ENCODE measurements at regions of chr10 and their contacts with region 1.

Region 1: DNA sequence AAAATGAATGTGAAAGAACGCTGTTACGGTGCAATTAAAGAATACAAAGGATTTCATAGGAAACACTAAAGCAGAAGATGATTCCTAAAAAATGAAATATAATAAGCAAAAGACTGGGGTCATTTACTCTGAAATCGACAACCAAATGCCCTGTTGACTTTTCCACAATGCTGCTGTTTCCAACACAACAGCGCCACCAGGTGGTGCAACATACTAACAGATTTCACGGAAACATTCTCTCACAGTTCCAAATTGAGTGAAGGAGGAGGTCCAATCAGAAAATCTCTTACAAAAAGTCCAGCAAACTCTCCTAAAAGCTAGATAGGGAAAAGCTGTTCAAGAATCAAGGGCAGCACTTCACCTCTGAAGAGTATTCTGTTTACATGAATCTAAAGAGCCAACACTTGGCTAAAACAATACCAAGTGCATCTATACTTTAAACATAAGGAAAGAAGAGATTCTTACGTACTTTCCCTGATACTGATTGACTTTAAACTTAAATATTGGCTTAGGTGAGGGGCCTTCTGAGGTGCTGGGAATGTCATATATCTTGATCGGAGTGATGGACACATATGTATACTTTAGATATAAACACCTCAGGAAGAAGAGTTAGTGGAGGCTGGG is 55.9 kb downstream of the UPF2 start:
- DNase-seq: peak; percentile 67
- CTCF ChIP-seq: peak; percentile 68

Region 2: DNA sequence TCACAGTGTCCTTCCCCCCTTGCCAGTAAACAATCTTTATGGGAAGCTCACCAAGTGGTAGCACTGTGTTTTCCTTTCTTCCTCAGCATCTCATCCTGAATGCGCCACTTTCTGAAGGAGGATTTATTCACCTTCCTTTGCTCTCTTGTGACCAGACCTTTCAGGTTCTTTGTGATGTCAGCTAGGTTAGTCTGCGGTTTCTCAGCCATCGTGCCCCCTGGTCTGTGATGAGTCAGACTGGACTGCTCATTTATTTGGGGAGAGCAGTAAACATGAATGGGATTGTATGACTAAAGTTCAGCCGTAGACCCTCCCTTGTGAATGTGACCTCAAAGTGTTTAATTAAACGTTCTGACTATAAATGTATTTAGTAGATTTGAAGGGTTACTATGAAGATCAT is 1204.1 kb before region 1 on chr10:
- CTCF ChIA-PET with region 1: no interaction called
- POLR2A ChIA-PET with region 1: no interaction called
- DNase-seq: no peak
- CTCF ChIP-seq: no peak

Region 3: GRCh38 chr10:11958956-11959355 is 27.7 kb before region 1 on chr10:
- CTCF ChIA-PET with region 1: interaction called, 13 read pairs
- POLR2A ChIA-PET with region 1: no interaction called
- DNase-seq: no peak
- CTCF ChIP-seq: no peak

Region 4: GRCh38 chr10:11975795-11976194 is 10.9 kb before region 1 on chr10:
- CTCF ChIA-PET with region 1: interaction called, 18 read pairs
- POLR2A ChIA-PET with region 1: no interaction called
- DNase-seq: no peak
- CTCF ChIP-seq: no peak

Region 5: GRCh38 chr10:12006671-12007070 is 20.0 kb after region 1 on chr10:
- CTCF ChIA-PET with region 1: interaction called, 24 read pairs
- POLR2A ChIA-PET with region 1: no interaction called
- DNase-seq: no peak
- CTCF ChIP-seq: no peak

Measured in GM10248 (cell line).